Activated CD4-positive, alpha-beta T cell treated with anti-CD3 and anti-CD28 coated beads for 36 hours (primary cell): ENCODE measurements at regions of chr10 and their contacts with region 1.

Region 1: GRCh38 chr10:112140110-112140970 is 43.2 kb downstream of the GPAM start:
- DNase-seq: peak; percentile 88
- ATAC-seq: peak; percentile 99
- H3K4me3 Mint-ChIP-seq: no peak overlapping the region
- H3K27ac Mint-ChIP-seq: no peak overlapping the region
- H3K4me1 Mint-ChIP-seq: no peaks in the 10 kb centered on the region
- H3K27me3 Mint-ChIP-seq: no peaks in the 10 kb centered on the region

Region 2: GRCh38 chr10:111076191-111076681 is 1064.1 kb before region 1 on chr10:
- CTCF ChIA-PET with region 1: interaction called, 6 read pairs
- POLR2A ChIA-PET with region 1: no interaction called
- intact Hi-C with region 1: loop called in 1 of 2 experiments (anchors 2 kb)
- DNase-seq: peak; percentile 78
- ATAC-seq: peak; percentile 81
- H3K4me3 Mint-ChIP-seq: peak overlapping the region; percentile 52
- H3K27ac Mint-ChIP-seq: no peak overlapping the region
- H3K4me1 Mint-ChIP-seq: peaks cover 9% of the 10 kb centered on the region
- H3K27me3 Mint-ChIP-seq: peaks cover 66% of the 10 kb centered on the region

Region 3: GRCh38 chr10:112030431-112030830 is 109.9 kb before region 1 on chr10:
- CTCF ChIA-PET with region 1: no interaction called
- POLR2A ChIA-PET with region 1: no interaction called
- intact Hi-C with region 1: no loop called
- DNase-seq: no peak
- ATAC-seq: no peak
- H3K4me3 Mint-ChIP-seq: no peak overlapping the region
- H3K27ac Mint-ChIP-seq: no peak overlapping the region
- H3K4me1 Mint-ChIP-seq: no peaks in the 10 kb centered on the region
- H3K27me3 Mint-ChIP-seq: no peaks in the 10 kb centered on the region

Region 4: GRCh38 chr10:112115799-112116385 is 24.4 kb before region 1 on chr10:
- CTCF ChIA-PET with region 1: interaction called, 38 read pairs
- POLR2A ChIA-PET with region 1: no interaction called
- intact Hi-C with region 1: no loop called
- DNase-seq: peak; percentile 68
- ATAC-seq: peak; percentile 66
- H3K4me3 Mint-ChIP-seq: no peak overlapping the region
- H3K27ac Mint-ChIP-seq: no peak overlapping the region
- H3K4me1 Mint-ChIP-seq: no peaks in the 10 kb centered on the region
- H3K27me3 Mint-ChIP-seq: no peaks in the 10 kb centered on the region

Region 5: GRCh38 chr10:112151524-112152039 is 11.2 kb after region 1 on chr10:
- CTCF ChIA-PET with region 1: interaction called, 11 read pairs
- POLR2A ChIA-PET with region 1: no interaction called
- intact Hi-C with region 1: no loop called
- DNase-seq: no peak
- ATAC-seq: no peak
- H3K4me3 Mint-ChIP-seq: no peak overlapping the region
- H3K27ac Mint-ChIP-seq: no peak overlapping the region
- H3K4me1 Mint-ChIP-seq: no peaks in the 10 kb centered on the region
- H3K27me3 Mint-ChIP-seq: no peaks in the 10 kb centered on the region

Region 6: DNA sequence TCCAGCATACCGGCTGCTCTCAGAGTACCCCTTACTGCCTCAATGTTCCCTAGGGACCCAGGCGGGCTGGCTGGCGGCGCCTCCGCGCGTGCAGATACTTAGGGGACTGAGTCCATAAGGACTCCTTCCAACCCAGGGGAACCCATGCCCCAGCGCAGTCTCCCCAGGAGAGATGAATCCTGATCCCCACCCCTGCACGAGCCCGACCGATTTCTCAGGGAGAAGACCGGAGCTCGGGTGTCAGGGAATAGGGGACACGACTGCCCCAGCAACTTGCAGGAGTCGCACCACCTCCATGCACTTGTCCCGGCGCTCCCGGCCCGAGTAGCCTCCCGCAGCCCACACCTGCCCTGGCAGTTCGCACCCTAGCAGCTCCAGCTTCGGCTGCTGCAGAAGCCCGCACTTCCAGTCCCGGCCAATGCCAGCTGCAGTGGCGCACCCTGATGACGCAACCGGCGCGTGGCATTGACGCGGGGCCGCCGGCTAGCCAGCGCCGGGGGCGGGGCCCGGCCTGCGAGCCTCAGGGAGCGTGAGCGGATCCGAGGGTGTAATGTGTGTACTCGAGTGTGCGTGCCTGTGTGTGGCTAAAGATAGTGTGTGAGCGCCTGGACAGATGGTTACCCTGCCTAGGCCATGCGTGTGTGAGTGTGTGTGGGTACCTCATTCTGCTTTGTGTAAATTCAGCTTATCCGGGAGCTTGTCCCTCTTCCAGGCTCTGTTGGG is 43.1 kb after region 1 on chr10 and contains the start of gene GPAM:
- CTCF ChIA-PET with region 1: interaction called, 7 read pairs
- POLR2A ChIA-PET with region 1: no interaction called
- intact Hi-C with region 1: loop called in 1 of 2 experiments (anchors 1 kb)
- DNase-seq: peak; percentile 98
- ATAC-seq: peak; percentile 97
- H3K4me3 Mint-ChIP-seq: peak within 1 kb of the TSS; percentile 88
- H3K27ac Mint-ChIP-seq: peak within 1 kb of the TSS; percentile 88
- H3K4me1 Mint-ChIP-seq: peaks cover 27% of the 10 kb centered on the region
- H3K27me3 Mint-ChIP-seq: peaks cover 2% of the 10 kb centered on the region
- total RNA-seq, gene GPAM: 5.7 to 7.5 TPM

Region 7: DNA sequence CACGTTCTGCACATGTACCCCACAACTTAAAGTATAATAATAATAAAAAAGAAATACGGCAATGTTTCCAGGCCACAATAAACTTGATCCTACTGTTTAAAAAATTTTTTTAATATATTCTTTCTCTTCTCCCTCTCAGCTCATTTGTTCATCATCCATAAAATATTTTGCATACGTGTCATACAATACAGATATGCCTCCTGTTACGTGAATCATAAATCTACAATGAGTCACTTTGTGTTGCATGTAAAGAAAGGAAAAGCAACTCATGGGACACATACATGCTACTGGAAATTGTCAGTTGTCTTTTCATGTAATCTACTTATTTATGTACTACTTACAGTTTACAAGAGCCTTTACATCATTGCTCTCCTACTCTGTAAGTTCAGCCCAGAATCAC is 141.7 kb after region 1 on chr10:
- CTCF ChIA-PET with region 1: no interaction called
- POLR2A ChIA-PET with region 1: no interaction called
- intact Hi-C with region 1: no loop called
- DNase-seq: no peak
- ATAC-seq: peak; percentile 16
- H3K4me3 Mint-ChIP-seq: no peak overlapping the region
- H3K27ac Mint-ChIP-seq: no peak overlapping the region
- H3K4me1 Mint-ChIP-seq: no peaks in the 10 kb centered on the region
- H3K27me3 Mint-ChIP-seq: peaks cover 19% of the 10 kb centered on the region